ENCODE measurements at regions of chr11 and their contacts with region 1.

Region 1: GRCh38 chr11:78645226-78646202 is 70.8 kb upstream of the NARS2 start:
- DNase-seq: peak; percentile 68
- H3K4me3 ChIP-seq: no peak overlapping the region
- H3K27ac ChIP-seq: no peak overlapping the region
- H3K4me1 ChIP-seq: peaks cover 0 to 6% (median 4%) of the 10 kb centered on the region in 4 donors
- H3K27me3 ChIP-seq: no peaks in the 10 kb centered on the region
- CTCF ChIP-seq: peak; percentile 87 to 96 (median 93)
- EP300 ChIP-seq: no peak
- POLR2A ChIP-seq: no peak

Region 2: DNA sequence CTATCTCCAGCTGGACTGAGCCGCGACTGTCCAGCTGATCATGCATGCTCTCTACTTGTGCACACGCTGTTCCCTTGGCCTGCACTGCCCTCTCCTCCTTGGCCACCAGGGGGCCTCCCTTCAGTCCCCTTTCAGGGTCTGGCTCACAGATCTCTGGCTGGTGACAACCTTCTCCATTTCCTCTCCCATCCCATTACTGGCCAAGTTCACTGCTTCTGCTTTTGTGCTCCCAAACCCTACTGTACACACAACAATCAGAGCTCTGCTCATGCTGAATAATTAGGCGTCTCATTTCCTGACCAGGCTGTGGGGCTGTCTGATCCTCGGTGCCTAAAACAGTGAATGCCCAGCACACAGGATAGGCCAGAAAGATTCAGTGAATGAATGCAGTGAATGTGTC is 153.1 kb after region 1 on chr11:
- intact Hi-C with region 1: loop called (anchors 10 kb)
- DNase-seq: peak; percentile 93
- H3K4me3 ChIP-seq: no peak overlapping the region
- H3K27ac ChIP-seq: peak overlapping the region in 3 of 4 donors; percentile 20 to 76 (median 25)
- H3K4me1 ChIP-seq: peaks cover 24 to 62% (median 56%) of the 10 kb centered on the region in 4 donors
- H3K27me3 ChIP-seq: no peaks in the 10 kb centered on the region
- CTCF ChIP-seq: peak; percentile 70 to 89 (median 75)
- EP300 ChIP-seq: no peak
- POLR2A ChIP-seq: no peak

Region 3: GRCh38 chr11:78961247-78961646 is 315.7 kb after region 1 on chr11:
- intact Hi-C with region 1: loop called (anchors 5 kb)
- DNase-seq: no peak
- H3K4me3 ChIP-seq: no peak overlapping the region
- H3K27ac ChIP-seq: no peak overlapping the region
- H3K4me1 ChIP-seq: peaks cover 9 to 16% (median 12%) of the 10 kb centered on the region in 4 donors
- H3K27me3 ChIP-seq: peaks cover 0 to 5% (median 0%) of the 10 kb centered on the region in 4 donors
- CTCF ChIP-seq: peak; percentile 26 to 49 (median 33)
- EP300 ChIP-seq: no peak
- POLR2A ChIP-seq: no peak

Region 4: GRCh38 chr11:79076526-79077115 is 431.1 kb after region 1 on chr11:
- intact Hi-C with region 1: loop called (anchors 10 kb)
- DNase-seq: no peak
- H3K4me3 ChIP-seq: no peak overlapping the region
- H3K27ac ChIP-seq: no peak overlapping the region
- H3K4me1 ChIP-seq: peaks cover 0 to 27% (median 13%) of the 10 kb centered on the region in 4 donors
- H3K27me3 ChIP-seq: no peaks in the 10 kb centered on the region
- CTCF ChIP-seq: peak; percentile 43 to 68 (median 45)
- EP300 ChIP-seq: no peak
- POLR2A ChIP-seq: no peak

Region 5: GRCh38 chr11:79100093-79100910 is 454.8 kb after region 1 on chr11:
- intact Hi-C with region 1: loop called (anchors 10 kb)
- DNase-seq: no peak
- H3K4me3 ChIP-seq: no peak overlapping the region
- H3K27ac ChIP-seq: no peak overlapping the region
- H3K4me1 ChIP-seq: peaks cover 0 to 74% (median 39%) of the 10 kb centered on the region in 4 donors
- H3K27me3 ChIP-seq: no peaks in the 10 kb centered on the region
- CTCF ChIP-seq: peak; percentile 65 to 81 (median 75)
- EP300 ChIP-seq: no peak
- POLR2A ChIP-seq: no peak

Region 6: DNA sequence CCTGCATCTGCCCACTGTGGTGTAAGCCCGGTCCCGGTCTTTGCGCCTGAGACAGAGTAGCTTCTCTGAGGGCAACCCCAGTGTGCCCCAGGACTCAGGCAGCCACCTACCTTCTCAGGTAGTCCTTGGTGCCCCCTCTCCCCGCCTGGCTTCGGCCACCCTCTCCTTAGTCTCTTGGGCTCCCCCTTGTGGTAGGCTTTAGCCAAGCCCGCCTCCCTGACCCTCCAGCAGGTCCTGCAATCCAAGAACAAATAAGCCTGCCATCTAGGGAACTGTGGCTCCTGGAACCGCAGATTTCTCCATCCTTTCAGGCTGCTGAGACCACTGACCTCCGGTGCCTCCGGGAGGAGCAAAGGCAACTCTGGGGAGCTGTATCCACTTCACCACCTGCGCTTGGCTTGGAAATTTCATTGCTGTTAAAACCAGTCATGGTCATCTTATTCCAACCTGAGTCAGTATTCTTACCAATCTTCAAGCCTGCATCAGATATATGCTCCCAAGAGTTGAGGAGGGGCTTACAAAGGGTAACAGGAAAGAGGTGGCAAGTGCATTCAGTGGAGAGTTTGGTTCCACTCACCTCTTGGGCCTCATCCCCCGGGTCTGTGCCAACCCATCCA is 848.1 kb after region 1 on chr11:
- intact Hi-C with region 1: loop called (anchors 5 kb)
- DNase-seq: no peak
- H3K4me3 ChIP-seq: no peak overlapping the region
- H3K27ac ChIP-seq: no peak overlapping the region
- H3K4me1 ChIP-seq: peaks cover 0 to 4% (median 0%) of the 10 kb centered on the region in 4 donors
- H3K27me3 ChIP-seq: no peaks in the 10 kb centered on the region
- CTCF ChIP-seq: peak; percentile 73 to 93 (median 89)
- EP300 ChIP-seq: no peak
- POLR2A ChIP-seq: no peak

Measured in esophagus muscularis mucosa (tissue), 4 donors.